ENCODE measurements at regions of chr11 and their contacts with region 1.

Region 1: GRCh38 chr11:72642884-72643511 is 31.2 kb downstream of the PDE2A start:
- DNase-seq: peak; percentile 83
- H3K4me3 ChIP-seq: peak overlapping the region; percentile 70 to 90 (median 84)
- H3K27ac ChIP-seq: peak overlapping the region; percentile 53 to 81 (median 78)
- H3K4me1 ChIP-seq: peaks cover 0 to 43% (median 41%) of the 10 kb centered on the region in 4 donors
- H3K27me3 ChIP-seq: no peaks in the 10 kb centered on the region
- CTCF ChIP-seq: peak; percentile 95 to 99 (median 98)
- EP300 ChIP-seq: no peak
- POLR2A ChIP-seq: no peak

Region 2: GRCh38 chr11:72425053-72425980 is 217.7 kb before region 1 on chr11:
- intact Hi-C with region 1: no loop called
- DNase-seq: peak; percentile 45
- H3K4me3 ChIP-seq: no peak overlapping the region
- H3K27ac ChIP-seq: no peak overlapping the region
- H3K4me1 ChIP-seq: no peaks in the 10 kb centered on the region
- H3K27me3 ChIP-seq: no peaks in the 10 kb centered on the region
- CTCF ChIP-seq: no peak
- EP300 ChIP-seq: no peak
- POLR2A ChIP-seq: no peak

Region 3: GRCh38 chr11:72471005-72471898 is 171.7 kb before region 1 on chr11:
- intact Hi-C with region 1: loop called (anchors 10 kb)
- DNase-seq: peak; percentile 83
- H3K4me3 ChIP-seq: no peak overlapping the region
- H3K27ac ChIP-seq: no peak overlapping the region
- H3K4me1 ChIP-seq: peaks cover 0 to 7% (median 3%) of the 10 kb centered on the region in 4 donors
- H3K27me3 ChIP-seq: peaks cover 0 to 12% (median 5%) of the 10 kb centered on the region in 3 donors
- CTCF ChIP-seq: peak; percentile 53 to 75 (median 73)
- EP300 ChIP-seq: no peak
- POLR2A ChIP-seq: no peak

Region 4: DNA sequence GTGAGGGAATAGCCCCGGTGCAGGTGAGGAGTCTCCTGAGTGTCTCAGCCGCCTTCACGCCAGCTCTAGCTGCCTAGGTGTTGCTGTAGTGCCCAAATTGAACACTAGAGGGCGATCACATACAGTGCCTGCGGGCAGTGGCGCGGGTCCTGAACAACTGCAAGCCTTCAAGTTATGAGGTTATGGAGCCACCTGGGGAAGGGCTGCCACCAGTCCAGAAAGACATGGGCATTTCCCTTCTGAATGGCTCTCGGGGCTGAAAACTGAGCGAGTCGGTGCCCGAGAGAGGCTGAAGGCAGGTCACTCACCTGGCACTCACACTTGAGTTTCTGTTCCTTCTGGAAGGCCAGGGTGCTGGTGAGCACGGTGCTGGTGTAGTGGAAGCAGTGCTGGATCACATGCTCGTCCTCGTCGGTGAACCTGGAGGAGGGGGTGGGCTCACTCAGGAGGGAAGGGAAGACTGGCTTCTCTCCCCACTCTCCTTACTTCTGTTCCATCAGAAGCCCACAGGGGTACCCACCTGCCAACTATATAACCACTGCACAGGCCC is 57.2 kb before region 1 on chr11:
- intact Hi-C with region 1: loop called (anchors 1 kb)
- DNase-seq: peak; percentile 85
- H3K4me3 ChIP-seq: no peak overlapping the region
- H3K27ac ChIP-seq: no peak overlapping the region
- H3K4me1 ChIP-seq: peaks cover 0 to 17% (median 8%) of the 10 kb centered on the region in 4 donors
- H3K27me3 ChIP-seq: no peaks in the 10 kb centered on the region
- CTCF ChIP-seq: peak; percentile 87 to 94 (median 90)
- EP300 ChIP-seq: no peak
- POLR2A ChIP-seq: no peak

Region 5: DNA sequence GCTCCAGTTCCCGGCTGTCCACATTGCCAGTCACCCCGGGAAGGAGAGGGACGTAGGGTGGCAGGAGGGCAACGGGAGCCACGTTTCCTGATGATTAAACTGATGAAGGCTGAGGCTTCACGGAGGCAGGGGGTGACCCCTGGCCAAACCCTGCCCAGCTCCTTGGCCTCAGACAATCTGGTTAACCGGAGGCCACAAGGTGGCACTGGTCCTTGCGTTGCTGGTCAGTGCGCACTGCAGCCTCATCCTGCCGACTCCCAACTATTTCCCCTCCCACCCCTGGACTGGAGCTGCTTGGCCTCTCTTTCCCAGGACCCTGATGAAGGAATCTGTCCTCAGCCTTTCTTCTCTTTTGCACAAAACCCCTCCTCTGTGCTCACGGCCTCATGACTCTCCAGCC is 44.1 kb before region 1 on chr11:
- intact Hi-C with region 1: loop called (anchors 1 kb)
- DNase-seq: peak; percentile 81
- H3K4me3 ChIP-seq: no peak overlapping the region
- H3K27ac ChIP-seq: no peak overlapping the region
- H3K4me1 ChIP-seq: peaks cover 0 to 8% (median 3%) of the 10 kb centered on the region in 4 donors
- H3K27me3 ChIP-seq: no peaks in the 10 kb centered on the region
- CTCF ChIP-seq: peak; percentile 50 to 74 (median 70)
- EP300 ChIP-seq: no peak
- POLR2A ChIP-seq: no peak

Region 6: DNA sequence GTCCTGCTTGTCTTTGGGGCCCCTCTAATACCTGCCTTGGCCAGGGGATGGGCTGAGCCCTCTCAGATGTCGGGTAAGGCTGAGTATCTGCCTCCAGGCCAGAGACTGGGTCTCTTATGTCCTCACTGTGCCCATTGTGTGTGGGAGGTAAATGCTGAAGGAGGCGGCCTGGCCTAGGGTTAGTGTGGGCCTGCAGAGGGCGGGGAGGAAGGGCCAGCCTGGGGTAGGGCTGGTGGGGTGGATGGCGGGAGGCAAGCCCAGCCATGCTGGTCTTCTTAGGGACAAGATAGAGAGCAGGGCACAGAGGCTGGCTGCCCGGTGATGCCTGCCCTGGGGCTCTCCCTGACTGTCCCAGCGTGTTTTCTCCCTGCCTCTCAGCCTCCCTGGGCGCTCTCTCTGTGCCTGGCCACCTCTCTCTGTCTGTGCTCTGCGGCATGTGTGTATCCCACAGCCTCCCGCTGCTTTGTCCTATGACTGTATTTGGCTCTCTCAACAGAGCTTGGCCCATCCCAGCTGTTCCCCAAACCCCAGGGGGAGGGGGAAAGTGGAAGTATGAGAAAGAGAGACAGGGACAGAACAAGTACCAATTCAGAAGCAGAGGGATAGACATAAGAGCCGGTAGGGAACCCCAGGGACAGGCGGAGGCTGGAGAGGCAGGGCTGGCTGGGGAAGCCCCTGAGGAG is 25.8 kb before region 1 on chr11:
- intact Hi-C with region 1: loop called (anchors 1 kb)
- DNase-seq: peak; percentile 93
- H3K4me3 ChIP-seq: peak overlapping the region in 2 of 4 donors; percentile 14 to 18
- H3K27ac ChIP-seq: peak overlapping the region; percentile 72 to 95 (median 90)
- H3K4me1 ChIP-seq: peaks cover 0 to 61% (median 60%) of the 10 kb centered on the region in 4 donors
- H3K27me3 ChIP-seq: no peaks in the 10 kb centered on the region
- CTCF ChIP-seq: no peak
- EP300 ChIP-seq: no peak
- POLR2A ChIP-seq: peak in 1 of 2 donors; percentile 20

Region 7: DNA sequence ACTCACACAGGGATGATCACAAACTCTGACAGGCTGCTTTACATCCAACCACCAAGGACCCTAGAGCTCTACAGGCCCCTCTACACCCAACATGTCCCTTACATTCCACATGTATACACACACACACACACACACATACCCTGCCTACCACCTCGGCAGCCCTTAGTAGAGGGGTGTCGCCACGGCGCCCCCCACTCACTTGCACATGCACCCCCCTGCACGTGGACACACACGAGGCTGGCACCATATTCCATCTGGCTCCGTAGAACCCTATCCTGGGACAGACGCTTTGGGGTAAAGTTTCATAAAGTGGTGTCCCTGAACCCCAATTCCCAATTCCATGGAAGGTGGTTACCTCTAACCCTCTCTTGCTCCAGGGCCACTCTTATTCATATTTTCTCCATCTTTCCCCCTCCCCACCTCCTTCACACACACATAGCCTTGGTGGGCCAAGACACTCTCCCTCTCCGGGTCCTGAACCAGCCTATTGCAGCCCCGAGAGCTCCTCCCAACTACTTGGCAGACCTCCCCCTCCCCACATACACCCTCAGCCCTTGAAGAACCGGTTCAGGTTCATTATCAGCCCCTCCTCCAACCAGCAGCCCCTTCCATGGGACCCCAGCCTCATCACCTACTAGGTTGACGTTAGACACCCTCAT is 30.4 kb after region 1 on chr11:
- intact Hi-C with region 1: no loop called
- DNase-seq: no peak
- H3K4me3 ChIP-seq: no peak overlapping the region
- H3K27ac ChIP-seq: no peak overlapping the region
- H3K4me1 ChIP-seq: peaks cover 0 to 6% (median 2%) of the 10 kb centered on the region in 4 donors
- H3K27me3 ChIP-seq: peaks cover 22 to 72% (median 69%) of the 10 kb centered on the region in 3 donors
- CTCF ChIP-seq: no peak
- EP300 ChIP-seq: no peak
- POLR2A ChIP-seq: no peak

Region 8: GRCh38 chr11:72683782-72684200 is 40.8 kb after region 1 on chr11:
- intact Hi-C with region 1: loop called (anchors 2 kb)
- DNase-seq: no peak
- H3K4me3 ChIP-seq: no peak overlapping the region
- H3K27ac ChIP-seq: peak overlapping the region in 2 of 4 donors; percentile 34 to 68
- H3K4me1 ChIP-seq: peaks cover 0 to 37% (median 8%) of the 10 kb centered on the region in 4 donors
- H3K27me3 ChIP-seq: peaks cover 0 to 20% (median 8%) of the 10 kb centered on the region in 3 donors
- CTCF ChIP-seq: peak; percentile 88 to 99 (median 94)
- EP300 ChIP-seq: no peak
- POLR2A ChIP-seq: no peak